B cell (primary cell): ENCODE measurements at regions of chr3 and their contacts with region 1.

Region 1: GRCh38 chr3:10322352-10322710 is 1.4 kb upstream of the SEC13 start:
- DNase-seq: peak; percentile 55
- ATAC-seq: no peak
- H3K4me3 ChIP-seq: no peak overlapping the region
- H3K4me3 Mint-ChIP-seq: peak overlapping the region; percentile 26
- H3K27ac ChIP-seq: no peak overlapping the region
- H3K27ac Mint-ChIP-seq: peak overlapping the region; percentile 70
- H3K4me1 ChIP-seq: peaks cover 11 to 21% of the 10 kb centered on the region in 2 donors
- H3K4me1 Mint-ChIP-seq: peaks cover 26% of the 10 kb centered on the region
- H3K27me3 ChIP-seq: peaks cover 0 to 2% (median 0%) of the 10 kb centered on the region in 4 experiments
- H3K27me3 Mint-ChIP-seq: peaks cover 8% of the 10 kb centered on the region
- CTCF ChIP-seq: peak; percentile 56

Region 2: GRCh38 chr3:9843715-9844438 is 478.5 kb before region 1 on chr3 and contains the start of gene RPUSD3:
- CTCF ChIA-PET with region 1: no interaction called
- POLR2A ChIA-PET with region 1: no interaction called
- intact Hi-C with region 1: loop called (anchors 5 kb)
- DNase-seq: peak; percentile 97
- ATAC-seq: peak; percentile 100
- H3K4me3 ChIP-seq: peak within 1 kb of the TSS; percentile 60 to 96 (median 73)
- H3K4me3 Mint-ChIP-seq: peak within 1 kb of the TSS; percentile 98
- H3K27ac ChIP-seq: peak within 1 kb of the TSS; percentile 17 to 75
- H3K27ac Mint-ChIP-seq: peak within 1 kb of the TSS; percentile 92
- H3K4me1 ChIP-seq: peaks cover 8 to 17% of the 10 kb centered on the region in 2 donors
- H3K4me1 Mint-ChIP-seq: peaks cover 20% of the 10 kb centered on the region
- H3K27me3 ChIP-seq: no peaks in the 10 kb centered on the region
- H3K27me3 Mint-ChIP-seq: no peaks in the 10 kb centered on the region
- CTCF ChIP-seq: no peak
- total RNA-seq, gene RPUSD3: 60.7 and 62.1 TPM in 2 replicates

Region 3: GRCh38 chr3:9986237-9986725 is 336.1 kb before region 1 on chr3:
- CTCF ChIA-PET with region 1: no interaction called
- POLR2A ChIA-PET with region 1: no interaction called
- intact Hi-C with region 1: loop called (anchors 1 kb)
- DNase-seq: no peak
- ATAC-seq: peak; percentile 28
- H3K4me3 ChIP-seq: peak overlapping the region; percentile 71 to 96 (median 82)
- H3K4me3 Mint-ChIP-seq: peak overlapping the region; percentile 98
- H3K27ac ChIP-seq: peak overlapping the region; percentile 88 to 97
- H3K27ac Mint-ChIP-seq: peak overlapping the region; percentile 100
- H3K4me1 ChIP-seq: peaks cover 16 to 22% of the 10 kb centered on the region in 2 donors
- H3K4me1 Mint-ChIP-seq: peaks cover 28% of the 10 kb centered on the region
- H3K27me3 ChIP-seq: no peaks in the 10 kb centered on the region
- H3K27me3 Mint-ChIP-seq: no peaks in the 10 kb centered on the region
- CTCF ChIP-seq: no peak

Region 4: GRCh38 chr3:10017636-10018292 is 304.6 kb before region 1 on chr3:
- CTCF ChIA-PET with region 1: no interaction called
- POLR2A ChIA-PET with region 1: no interaction called
- intact Hi-C with region 1: no loop called
- DNase-seq: no peak
- ATAC-seq: no peak
- H3K4me3 ChIP-seq: no peak overlapping the region
- H3K4me3 Mint-ChIP-seq: no peak overlapping the region
- H3K27ac ChIP-seq: no peak overlapping the region
- H3K27ac Mint-ChIP-seq: no peak overlapping the region
- H3K4me1 ChIP-seq: no peaks in the 10 kb centered on the region
- H3K4me1 Mint-ChIP-seq: no peaks in the 10 kb centered on the region
- H3K27me3 ChIP-seq: no peaks in the 10 kb centered on the region
- H3K27me3 Mint-ChIP-seq: no peaks in the 10 kb centered on the region
- CTCF ChIP-seq: no peak

Region 5: DNA sequence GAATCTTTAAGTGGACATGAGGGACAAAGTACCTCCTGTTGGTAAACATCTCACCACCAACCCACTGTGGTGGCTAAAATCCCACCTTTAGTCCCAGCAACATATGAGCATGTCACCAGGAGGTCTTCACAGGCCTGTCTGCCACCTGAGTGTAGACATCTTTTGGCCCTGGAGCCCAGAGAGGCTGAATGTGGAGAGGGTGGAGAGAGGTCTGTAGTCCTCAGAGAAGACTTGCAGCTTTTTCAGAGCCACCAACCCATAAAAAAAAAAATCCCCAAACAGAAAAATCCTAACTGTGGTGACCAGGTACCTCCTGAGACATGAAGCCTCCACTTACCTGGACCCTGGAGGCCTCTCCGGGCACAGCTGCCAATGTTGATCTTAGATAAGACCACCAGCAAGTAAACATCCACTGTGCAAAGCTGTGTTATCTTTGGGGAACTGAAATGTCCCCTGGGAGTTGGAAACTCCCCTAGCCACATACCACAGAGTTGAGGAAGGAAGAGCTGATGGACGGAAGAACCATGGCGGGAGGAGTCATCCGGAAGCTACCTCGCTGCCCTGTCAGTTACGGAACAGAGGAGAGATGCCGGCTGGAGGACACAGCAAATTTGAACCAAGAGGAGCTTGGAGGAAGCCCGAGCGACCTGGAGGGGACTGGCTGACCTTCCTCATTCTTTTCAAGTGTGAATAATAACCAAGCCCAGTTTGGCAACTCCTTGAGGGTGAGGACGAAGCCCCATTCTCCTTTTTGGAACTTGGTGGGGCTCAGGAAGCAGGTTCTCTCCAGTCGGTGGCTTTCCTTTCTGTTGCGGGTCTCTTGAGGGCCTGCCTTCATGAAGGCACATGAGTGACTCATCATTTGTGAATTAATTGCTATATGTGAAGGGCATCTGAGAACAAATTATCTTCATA is 29.6 kb before region 1 on chr3 and contains the start of gene GHRL:
- CTCF ChIA-PET with region 1: interaction called, 4 read pairs
- POLR2A ChIA-PET with region 1: interaction called, 3 read pairs
- intact Hi-C with region 1: loop called (anchors 1 kb)
- DNase-seq: peak; percentile 90
- ATAC-seq: peak; percentile 91
- H3K4me3 ChIP-seq: peak within 1 kb of the TSS; percentile 1 to 41 (median 36)
- H3K4me3 Mint-ChIP-seq: peak within 1 kb of the TSS; percentile 79
- H3K27ac ChIP-seq: peak within 1 kb of the TSS; percentile 71 to 75
- H3K27ac Mint-ChIP-seq: peak within 1 kb of the TSS; percentile 89
- H3K4me1 ChIP-seq: peaks cover 26 to 30% of the 10 kb centered on the region in 2 donors
- H3K4me1 Mint-ChIP-seq: peaks cover 38% of the 10 kb centered on the region
- H3K27me3 ChIP-seq: no peaks in the 10 kb centered on the region
- H3K27me3 Mint-ChIP-seq: no peaks in the 10 kb centered on the region
- CTCF ChIP-seq: no peak
- total RNA-seq, gene GHRL: 2.8 TPM in 2 replicates

Region 6: GRCh38 chr3:10609134-10609533 is 286.8 kb after region 1 on chr3:
- CTCF ChIA-PET with region 1: no interaction called
- POLR2A ChIA-PET with region 1: no interaction called
- intact Hi-C with region 1: no loop called
- DNase-seq: no peak
- ATAC-seq: no peak
- H3K4me3 ChIP-seq: no peak overlapping the region
- H3K4me3 Mint-ChIP-seq: no peak overlapping the region
- H3K27ac ChIP-seq: no peak overlapping the region
- H3K27ac Mint-ChIP-seq: no peak overlapping the region
- H3K4me1 ChIP-seq: no peaks in the 10 kb centered on the region
- H3K4me1 Mint-ChIP-seq: peaks cover 2% of the 10 kb centered on the region
- H3K27me3 ChIP-seq: peaks cover 0 to 9% (median 2%) of the 10 kb centered on the region in 4 experiments
- H3K27me3 Mint-ChIP-seq: peaks cover 31% of the 10 kb centered on the region
- CTCF ChIP-seq: no peak

Region 7: DNA sequence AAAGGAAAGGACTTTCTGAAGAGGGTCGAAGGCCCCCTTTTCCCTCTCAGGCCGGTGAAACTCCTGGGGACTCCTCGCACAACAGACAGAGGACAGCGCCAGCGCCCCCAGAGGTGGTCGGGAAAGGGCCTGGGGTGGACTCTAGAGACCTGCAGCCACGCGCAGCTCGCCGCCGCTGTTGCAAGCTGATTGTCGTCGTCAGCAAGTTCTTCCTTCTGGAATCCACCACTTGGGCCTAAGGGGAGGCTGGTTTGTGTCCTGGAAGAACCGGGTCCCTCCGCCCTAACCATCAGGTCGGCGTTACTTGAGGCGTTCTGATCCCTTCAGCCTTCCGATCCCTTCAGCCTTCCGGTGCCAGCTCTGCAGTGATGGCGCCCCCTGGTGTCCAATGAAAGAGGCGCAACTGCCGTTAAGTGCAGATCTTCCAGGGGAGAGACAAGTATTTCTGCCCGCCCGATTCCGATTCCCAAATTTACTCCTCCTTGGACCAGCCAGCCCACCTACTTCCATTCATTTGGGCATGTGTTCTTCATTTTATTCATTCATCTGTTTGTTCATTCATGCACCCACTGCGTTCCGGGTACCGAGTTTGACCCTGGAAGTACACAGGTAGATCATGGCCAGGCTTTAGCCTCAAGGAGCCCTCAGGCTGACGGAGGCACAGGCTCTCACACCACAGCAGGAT is 416.5 kb after region 1 on chr3:
- CTCF ChIA-PET with region 1: interaction called, 15 read pairs
- POLR2A ChIA-PET with region 1: no interaction called
- intact Hi-C with region 1: no loop called
- DNase-seq: peak; percentile 81
- ATAC-seq: peak; percentile 70
- H3K4me3 ChIP-seq: peak overlapping the region in 3 of 5 experiments; percentile 29 to 56 (median 38)
- H3K4me3 Mint-ChIP-seq: peak overlapping the region; percentile 77
- H3K27ac ChIP-seq: no peak overlapping the region
- H3K27ac Mint-ChIP-seq: no peak overlapping the region
- H3K4me1 ChIP-seq: peaks cover 4 to 9% of the 10 kb centered on the region in 2 donors
- H3K4me1 Mint-ChIP-seq: peaks cover 7% of the 10 kb centered on the region
- H3K27me3 ChIP-seq: peaks cover 0 to 22% (median 12%) of the 10 kb centered on the region in 4 experiments
- H3K27me3 Mint-ChIP-seq: peaks cover 64% of the 10 kb centered on the region
- CTCF ChIP-seq: peak; percentile 90